GM12878 (cell line): ENCODE measurements at regions of chr3 and their contacts with region 1.

Region 1: GRCh38 chr3:106299300-106300098 is 430.7 kb upstream of the CBLB start:
- DNase-seq: peak; percentile 90
- ATAC-seq: peak; percentile 71
- H3K4me3 ChIP-seq: no peak overlapping the region
- H3K27ac ChIP-seq: peak overlapping the region; percentile 92
- H3K4me1 ChIP-seq: peaks cover 47% of the 10 kb centered on the region
- H3K27me3 ChIP-seq: no peaks in the 10 kb centered on the region
- CTCF ChIP-seq: no peak
- EP300 ChIP-seq: peak; percentile 73 to 79; a peak in 2 of 4 replicates
- POLR2A ChIP-seq: no peak
- RAD21 ChIP-seq: 0 out of 2 replicates have a peak, but pooled peaks have one; percentile 6

Region 2: DNA sequence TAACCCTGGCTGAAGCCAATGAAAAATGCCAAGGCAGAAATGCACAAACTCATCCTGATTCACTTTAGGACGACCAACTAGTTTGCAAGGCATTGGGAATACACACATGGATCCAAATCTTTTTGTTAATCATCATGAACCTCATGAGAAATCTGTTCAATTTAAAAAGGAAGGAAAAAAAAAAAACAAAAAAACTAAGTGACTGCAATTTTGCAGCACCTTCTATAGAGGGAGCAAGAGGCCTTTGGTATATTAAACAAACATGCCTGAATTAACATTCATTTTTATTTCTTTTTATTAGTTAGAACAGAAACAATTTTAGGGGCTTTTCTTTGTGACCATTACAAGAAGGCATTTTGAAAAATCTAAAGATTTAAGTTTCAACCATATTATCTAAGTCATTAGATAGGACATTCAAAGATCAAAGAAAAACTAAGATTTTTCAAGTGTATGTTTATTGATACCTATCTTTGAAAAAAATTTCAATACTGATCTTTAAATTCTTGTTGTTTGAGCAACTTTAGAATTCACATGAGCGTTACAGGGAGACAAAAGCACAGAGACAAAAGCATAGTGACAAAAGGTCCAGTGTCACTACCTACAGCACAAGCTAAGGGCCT is 613.1 kb before region 1 on chr3:
- CTCF ChIA-PET with region 1: interaction called, 3 read pairs
- POLR2A ChIA-PET with region 1: no interaction called
- RAD21 ChIA-PET with region 1: no interaction called
- SMC1A ChIA-PET with region 1: interaction called, 3 read pairs
- in situ Hi-C with region 1: no loop called
- intact Hi-C with region 1: loop called (anchors 10 kb)
- DNase-seq: no peak
- ATAC-seq: peak; percentile 46
- H3K4me3 ChIP-seq: no peak overlapping the region
- H3K27ac ChIP-seq: no peak overlapping the region
- H3K4me1 ChIP-seq: no peaks in the 10 kb centered on the region
- H3K27me3 ChIP-seq: no peaks in the 10 kb centered on the region
- CTCF ChIP-seq: peak; percentile 57 to 69 (median 65)
- EP300 ChIP-seq: no peak
- POLR2A ChIP-seq: no peak
- RAD21 ChIP-seq: peak; percentile 83

Region 3: GRCh38 chr3:106176734-106177133 is 122.8 kb before region 1 on chr3:
- CTCF ChIA-PET with region 1: no interaction called
- POLR2A ChIA-PET with region 1: interaction called, 3 read pairs
- RAD21 ChIA-PET with region 1: interaction called, 5 read pairs
- SMC1A ChIA-PET with region 1: interaction called, 66 read pairs
- in situ Hi-C with region 1: no loop called
- intact Hi-C with region 1: loop called (anchors 2 kb)
- DNase-seq: peak; percentile 88
- ATAC-seq: peak; percentile 91
- H3K4me3 ChIP-seq: 0 out of 2 replicates have a peak overlapping the region, but pooled peaks have one; percentile 11
- H3K27ac ChIP-seq: peak overlapping the region; percentile 75
- H3K4me1 ChIP-seq: peaks cover 39% of the 10 kb centered on the region
- H3K27me3 ChIP-seq: no peaks in the 10 kb centered on the region
- CTCF ChIP-seq: no peak
- EP300 ChIP-seq: peak; percentile 5 to 67; a peak in 1 of 4 replicates
- POLR2A ChIP-seq: no peak
- RAD21 ChIP-seq: peak; percentile 37; the same call in 1 of the 2 replicates

Region 4: GRCh38 chr3:106255870-106256248 is 43.6 kb before region 1 on chr3:
- CTCF ChIA-PET with region 1: interaction called, 7 read pairs
- POLR2A ChIA-PET with region 1: interaction called, 16 read pairs
- RAD21 ChIA-PET with region 1: interaction called, 69 read pairs
- SMC1A ChIA-PET with region 1: interaction called, 29 read pairs
- in situ Hi-C with region 1: no loop called
- intact Hi-C with region 1: loop called (anchors 1 kb)
- DNase-seq: peak; percentile 93
- ATAC-seq: peak; percentile 88
- H3K4me3 ChIP-seq: peak overlapping the region; percentile 83
- H3K27ac ChIP-seq: peak overlapping the region; percentile 99
- H3K4me1 ChIP-seq: no peaks in the 10 kb centered on the region
- H3K27me3 ChIP-seq: no peaks in the 10 kb centered on the region
- CTCF ChIP-seq: no peak
- EP300 ChIP-seq: peak in 1 of 2 experiments; percentile 82; a peak in 2 of 4 replicates
- POLR2A ChIP-seq: peak; percentile 71
- RAD21 ChIP-seq: peak; percentile 7; the same call in 1 of the 2 replicates

Region 5: GRCh38 chr3:106333911-106334618 is 34.6 kb after region 1 on chr3:
- CTCF ChIA-PET with region 1: no interaction called
- POLR2A ChIA-PET with region 1: interaction called, 12 read pairs
- RAD21 ChIA-PET with region 1: interaction called, 16 read pairs
- SMC1A ChIA-PET with region 1: interaction called, 65 read pairs
- in situ Hi-C with region 1: no loop called
- intact Hi-C with region 1: loop called (anchors 1 kb)
- DNase-seq: no peak
- ATAC-seq: peak; percentile 78
- H3K4me3 ChIP-seq: no peak overlapping the region
- H3K27ac ChIP-seq: peak overlapping the region; percentile 13; the same call in 1 of the 2 replicates
- H3K4me1 ChIP-seq: peaks cover 20% of the 10 kb centered on the region
- H3K27me3 ChIP-seq: no peaks in the 10 kb centered on the region
- CTCF ChIP-seq: no peak
- EP300 ChIP-seq: peak in 1 of 2 experiments; percentile 59; a peak in 1 of 4 replicates
- POLR2A ChIP-seq: no peak
- RAD21 ChIP-seq: 0 out of 2 replicates have a peak, but pooled peaks have one; percentile 7

Region 6: DNA sequence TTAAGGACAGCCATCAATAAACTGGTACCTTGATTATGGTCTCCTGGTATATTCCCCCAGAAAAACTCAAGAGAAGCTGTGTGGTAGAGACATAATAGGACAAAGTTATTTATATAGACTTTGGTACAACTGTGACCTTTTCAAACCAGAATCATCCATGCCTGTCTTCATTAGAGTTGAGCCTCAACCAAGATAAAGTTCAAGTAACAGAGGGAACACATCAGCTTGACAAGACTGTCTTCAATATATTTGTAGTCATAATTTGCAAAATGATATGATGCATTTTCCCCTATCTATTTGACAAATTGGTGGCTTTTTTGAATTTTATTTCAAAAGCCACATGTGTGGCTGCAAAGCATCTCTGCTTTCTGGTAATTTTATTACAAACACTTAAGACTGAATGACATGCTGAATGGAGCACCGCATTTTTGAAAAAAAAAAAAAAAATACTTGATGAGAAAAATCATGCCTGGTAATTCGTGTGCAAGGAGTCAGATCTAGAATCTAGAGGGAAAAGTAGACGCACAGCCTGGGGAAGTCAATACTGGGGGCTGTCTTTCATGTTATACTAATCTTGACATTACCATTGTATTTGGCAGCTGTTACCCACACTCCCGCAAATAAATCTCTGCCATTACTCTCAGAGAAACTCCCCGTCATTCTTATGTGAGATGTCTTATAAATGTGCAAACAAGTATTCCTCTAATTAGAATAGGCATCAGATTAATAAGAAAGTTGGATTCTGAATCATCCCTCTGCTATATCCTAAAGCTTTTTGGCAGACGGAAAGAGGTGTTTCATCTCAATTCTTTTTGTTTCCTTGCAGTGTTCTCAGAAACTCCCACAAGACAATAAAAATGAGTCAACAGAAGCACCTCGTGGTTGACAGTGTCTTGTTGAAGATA is 124.1 kb after region 1 on chr3:
- CTCF ChIA-PET with region 1: no interaction called
- POLR2A ChIA-PET with region 1: no interaction called
- RAD21 ChIA-PET with region 1: interaction called, 3 read pairs
- SMC1A ChIA-PET with region 1: no interaction called
- in situ Hi-C with region 1: no loop called
- intact Hi-C with region 1: loop called (anchors 2 kb)
- DNase-seq: no peak
- ATAC-seq: peak; percentile 75
- H3K4me3 ChIP-seq: no peak overlapping the region
- H3K27ac ChIP-seq: peak overlapping the region; percentile 50
- H3K4me1 ChIP-seq: peaks cover 17% of the 10 kb centered on the region
- H3K27me3 ChIP-seq: no peaks in the 10 kb centered on the region
- CTCF ChIP-seq: no peak
- EP300 ChIP-seq: no peak
- POLR2A ChIP-seq: no peak
- RAD21 ChIP-seq: 0 out of 2 replicates have a peak, but pooled peaks have one; percentile 15

Region 7: DNA sequence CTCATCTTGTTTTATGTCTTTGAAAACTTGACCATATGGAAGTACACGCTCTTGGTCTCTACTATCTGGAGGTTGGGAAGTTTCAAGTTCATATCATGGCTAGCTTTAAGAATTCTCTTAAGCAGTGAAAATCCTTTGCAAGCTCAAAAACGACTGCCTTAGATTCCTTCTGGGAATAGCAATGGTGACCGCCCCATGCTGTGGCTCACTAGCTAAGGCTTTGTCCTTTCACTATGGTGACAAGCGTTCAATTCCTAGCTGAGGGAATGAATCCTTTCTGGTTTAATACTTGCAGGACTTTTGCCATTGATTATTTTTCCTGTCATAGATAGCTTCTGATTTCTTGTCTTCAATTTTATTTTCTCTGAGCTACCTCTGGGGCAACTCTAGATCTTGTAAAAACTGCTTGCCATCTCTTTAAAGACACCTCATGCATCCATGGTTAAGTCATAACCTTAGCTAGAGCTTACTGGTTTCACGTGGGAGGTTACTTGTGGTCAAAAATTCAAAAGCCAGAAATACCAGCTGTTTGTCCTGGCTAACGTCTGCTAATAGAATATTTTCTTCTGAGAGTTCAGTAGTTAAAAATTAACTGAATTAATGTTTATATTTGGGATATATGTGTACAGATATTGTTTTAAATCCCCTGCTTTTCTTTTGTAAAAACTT is 242.7 kb after region 1 on chr3:
- CTCF ChIA-PET with region 1: no interaction called
- POLR2A ChIA-PET with region 1: no interaction called
- RAD21 ChIA-PET with region 1: no interaction called
- SMC1A ChIA-PET with region 1: interaction called, 3 read pairs
- in situ Hi-C with region 1: no loop called
- intact Hi-C with region 1: loop called (anchors 5 kb)
- DNase-seq: no peak
- ATAC-seq: peak; percentile 67
- H3K4me3 ChIP-seq: no peak overlapping the region
- H3K27ac ChIP-seq: no peak overlapping the region
- H3K4me1 ChIP-seq: no peaks in the 10 kb centered on the region
- H3K27me3 ChIP-seq: no peaks in the 10 kb centered on the region
- CTCF ChIP-seq: no peak
- EP300 ChIP-seq: no peak
- POLR2A ChIP-seq: no peak
- RAD21 ChIP-seq: no peak